Activated CD8-positive, alpha-beta T cell treated with anti-CD3 and anti-CD28 coated beads for 36 hours (primary cell): ENCODE measurements at regions of chr5 and their contacts with region 1.

Region 1: DNA sequence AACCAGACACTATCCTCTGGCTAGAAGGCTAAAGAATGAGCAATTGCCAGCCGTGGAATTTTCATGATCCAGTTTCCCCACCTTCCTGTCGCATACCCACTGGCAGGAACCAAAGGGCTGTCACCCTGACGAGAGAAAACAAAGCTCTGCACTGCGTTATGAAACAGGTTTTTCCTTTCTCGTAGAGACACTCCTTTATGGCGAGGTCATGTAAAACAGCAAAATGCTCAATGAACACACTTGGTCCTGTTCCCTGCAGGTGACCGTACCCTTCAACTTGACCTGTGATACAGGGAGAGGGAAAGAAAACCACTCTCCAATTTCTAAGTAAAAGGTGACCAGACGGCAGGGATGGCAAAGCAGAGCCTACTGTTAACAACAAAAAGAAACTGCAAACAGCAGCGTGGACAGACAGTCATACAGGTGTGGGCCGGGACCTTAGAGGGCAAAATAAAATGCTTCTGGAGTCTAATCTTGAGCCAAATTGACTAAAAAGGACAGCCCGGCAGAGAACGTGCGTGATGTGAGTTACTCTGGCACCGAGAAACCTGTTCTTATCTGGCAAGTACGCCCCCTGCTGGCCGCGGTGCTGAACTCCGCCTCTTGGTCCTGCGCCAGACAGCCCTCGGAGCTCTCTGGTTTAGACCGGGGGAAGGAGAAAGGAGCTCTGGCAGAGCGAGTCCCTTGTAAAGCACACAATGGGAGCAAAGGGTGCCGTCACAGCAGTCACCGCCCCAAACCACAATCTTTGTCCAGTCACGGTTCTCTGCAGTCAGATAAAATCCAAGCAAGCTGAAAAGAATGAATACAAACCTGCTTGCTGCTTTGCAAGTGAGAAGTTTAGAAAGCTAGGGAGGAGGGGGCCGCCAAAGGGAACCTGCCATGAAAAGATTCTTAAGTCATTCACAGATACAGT is 98.9 kb downstream of the EFNA5 start:
- DNase-seq: peak; percentile 93
- ATAC-seq: peak; percentile 93
- H3K4me3 Mint-ChIP-seq: peak overlapping the region; percentile 66
- H3K27ac Mint-ChIP-seq: no peak overlapping the region
- H3K4me1 Mint-ChIP-seq: peaks cover 14% of the 10 kb centered on the region
- H3K27me3 Mint-ChIP-seq: peaks cover 12% of the 10 kb centered on the region
- CTCF ChIP-seq: peak; percentile 87

Region 2: DNA sequence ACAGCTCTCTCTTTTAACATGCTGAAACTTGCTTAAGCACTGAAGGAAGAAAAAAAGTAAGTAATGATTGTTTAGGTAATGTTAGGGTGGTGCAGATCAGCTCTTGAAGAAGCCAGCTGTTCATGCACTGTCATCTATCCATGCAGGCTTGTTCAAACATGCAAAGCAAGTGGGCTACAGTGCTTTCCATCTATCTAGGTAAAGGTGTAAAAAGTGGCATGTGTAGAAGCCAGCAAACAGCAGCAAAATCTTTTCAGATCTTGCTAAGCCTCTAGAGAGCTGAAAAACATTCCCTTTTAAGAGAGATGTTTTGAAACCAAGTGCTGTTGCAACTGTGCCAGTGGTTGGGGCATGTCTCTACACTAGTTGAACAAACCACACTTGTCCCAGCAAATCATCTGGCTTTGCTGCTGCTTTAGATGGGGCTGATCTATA is 115.6 kb before region 1 on chr5:
- CTCF ChIA-PET with region 1: no interaction called
- POLR2A ChIA-PET with region 1: no interaction called
- intact Hi-C with region 1: no loop called
- DNase-seq: no peak
- ATAC-seq: no peak
- H3K4me3 Mint-ChIP-seq: no peak overlapping the region
- H3K27ac Mint-ChIP-seq: no peak overlapping the region
- H3K4me1 Mint-ChIP-seq: no peaks in the 10 kb centered on the region
- H3K27me3 Mint-ChIP-seq: peaks cover 4% of the 10 kb centered on the region
- CTCF ChIP-seq: no peak

Region 3: GRCh38 chr5:107478068-107478641 is 93.7 kb before region 1 on chr5:
- CTCF ChIA-PET with region 1: no interaction called
- POLR2A ChIA-PET with region 1: no interaction called
- intact Hi-C with region 1: no loop called
- DNase-seq: no peak
- ATAC-seq: no peak
- H3K4me3 Mint-ChIP-seq: no peak overlapping the region
- H3K27ac Mint-ChIP-seq: no peak overlapping the region
- H3K4me1 Mint-ChIP-seq: peaks cover 3% of the 10 kb centered on the region
- H3K27me3 Mint-ChIP-seq: peaks cover 3% of the 10 kb centered on the region
- CTCF ChIP-seq: no peak

Region 4: DNA sequence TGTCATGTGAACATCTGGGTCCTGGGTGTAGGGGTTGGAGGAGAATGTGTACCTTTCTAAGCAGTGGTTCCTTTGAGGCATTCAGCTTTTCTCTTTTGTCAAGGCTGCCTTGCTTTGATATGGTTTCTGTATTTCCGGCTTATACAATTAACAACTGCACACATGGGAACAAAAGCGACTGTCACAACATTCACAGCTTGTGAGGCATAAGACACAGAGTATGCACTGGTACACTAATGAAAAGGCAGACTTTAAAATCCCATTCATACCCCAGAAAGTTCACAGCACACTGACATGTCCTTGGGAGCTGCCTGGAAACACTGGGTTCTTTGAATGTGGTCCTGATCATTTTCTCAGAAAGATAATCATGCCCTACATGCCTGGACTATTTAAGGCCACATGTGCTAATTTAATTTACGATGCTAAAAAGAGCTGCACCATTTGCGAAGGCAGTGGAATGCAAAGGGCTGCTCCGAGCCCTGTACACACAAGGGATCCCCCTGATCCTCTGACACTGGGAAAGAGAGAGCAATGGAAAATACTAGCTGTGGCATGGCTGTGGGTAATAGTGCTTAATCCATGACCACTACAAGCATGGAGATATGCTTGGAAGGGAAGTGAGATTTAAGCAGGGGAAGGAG is 33.0 kb before region 1 on chr5:
- CTCF ChIA-PET with region 1: interaction called, 11 read pairs
- POLR2A ChIA-PET with region 1: no interaction called
- intact Hi-C with region 1: no loop called
- DNase-seq: no peak
- ATAC-seq: no peak
- H3K4me3 Mint-ChIP-seq: no peak overlapping the region
- H3K27ac Mint-ChIP-seq: no peak overlapping the region
- H3K4me1 Mint-ChIP-seq: peaks cover 5% of the 10 kb centered on the region
- H3K27me3 Mint-ChIP-seq: peaks cover 6% of the 10 kb centered on the region
- CTCF ChIP-seq: no peak

Region 5: GRCh38 chr5:107602896-107603295 is 31.0 kb after region 1 on chr5:
- CTCF ChIA-PET with region 1: interaction called, 11 read pairs
- POLR2A ChIA-PET with region 1: no interaction called
- intact Hi-C with region 1: no loop called
- DNase-seq: no peak
- ATAC-seq: no peak
- H3K4me3 Mint-ChIP-seq: no peak overlapping the region
- H3K27ac Mint-ChIP-seq: no peak overlapping the region
- H3K4me1 Mint-ChIP-seq: no peaks in the 10 kb centered on the region
- H3K27me3 Mint-ChIP-seq: peaks cover 17% of the 10 kb centered on the region
- CTCF ChIP-seq: no peak